H1 (cell line): ENCODE measurements at regions of chrX and their contacts with region 1.

Region 1: GRCh38 chrX:146189371-146189770 is 371.7 kb downstream of the SLITRK2 start:
- DNase-seq: no peak
- H3K4me3 ChIP-seq: no peak overlapping the region
- H3K27ac ChIP-seq: no peak overlapping the region
- H3K4me1 ChIP-seq: no peaks in the 10 kb centered on the region
- H3K27me3 ChIP-seq: no peaks in the 10 kb centered on the region
- CTCF ChIP-seq: no peak
- EP300 ChIP-seq: no peak
- POLR2A ChIP-seq: no peak
- RAD21 ChIP-seq: no peak

Region 2: DNA sequence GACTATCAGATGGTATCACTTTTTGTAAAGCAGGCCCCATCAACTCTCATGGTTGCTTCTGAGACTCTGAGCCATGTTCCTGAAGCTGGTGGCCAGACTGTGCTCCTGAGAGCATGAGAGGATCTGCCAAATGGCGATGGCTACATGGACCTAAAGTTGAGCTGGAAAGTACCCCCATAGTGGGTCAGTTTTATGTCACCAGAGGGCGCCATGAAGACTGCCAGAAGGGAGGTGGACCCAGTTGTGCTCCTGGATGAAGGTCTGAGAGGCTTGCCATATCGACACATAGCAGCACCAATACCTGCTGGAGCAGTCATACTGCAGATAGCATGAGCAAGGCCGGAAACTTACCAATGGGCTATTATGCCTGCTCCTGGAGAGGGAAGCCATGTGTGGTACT is 266.0 kb before region 1 on chrX:
- CTCF ChIA-PET with region 1: interaction called, 10 read pairs
- POLR2A ChIA-PET with region 1: no interaction called
- DNase-seq: peak; percentile 0 to 55
- H3K4me3 ChIP-seq: no peak overlapping the region
- H3K27ac ChIP-seq: no peak overlapping the region
- H3K4me1 ChIP-seq: no peaks in the 10 kb centered on the region
- H3K27me3 ChIP-seq: no peaks in the 10 kb centered on the region
- CTCF ChIP-seq: peak; percentile 3 to 48 (median 45)
- EP300 ChIP-seq: no peak
- POLR2A ChIP-seq: no peak
- RAD21 ChIP-seq: peak; percentile 52 to 65

Region 3: DNA sequence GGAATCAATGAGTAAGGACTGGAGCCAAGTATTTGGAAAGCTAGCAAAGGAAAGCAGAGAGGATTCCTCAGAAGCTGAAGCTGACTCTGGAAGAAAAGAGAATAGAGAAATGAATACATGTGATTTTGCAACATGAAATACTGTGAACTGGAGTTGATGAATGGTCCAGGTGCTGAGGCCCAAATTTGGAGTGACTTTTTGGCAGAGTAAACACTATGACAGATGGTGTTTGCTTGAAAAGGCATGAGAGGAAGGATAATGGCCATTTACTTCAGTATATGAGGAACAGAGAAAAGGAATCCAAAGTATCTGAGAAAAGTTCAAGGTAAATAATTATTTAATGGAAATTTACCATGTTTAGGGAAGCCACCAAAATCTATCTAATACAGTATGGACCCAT is 135.1 kb before region 1 on chrX:
- CTCF ChIA-PET with region 1: no interaction called
- POLR2A ChIA-PET with region 1: no interaction called
- DNase-seq: no peak
- H3K4me3 ChIP-seq: no peak overlapping the region
- H3K27ac ChIP-seq: no peak overlapping the region
- H3K4me1 ChIP-seq: no peaks in the 10 kb centered on the region
- H3K27me3 ChIP-seq: no peaks in the 10 kb centered on the region
- CTCF ChIP-seq: no peak
- EP300 ChIP-seq: no peak
- POLR2A ChIP-seq: no peak
- RAD21 ChIP-seq: no peak

Region 4: DNA sequence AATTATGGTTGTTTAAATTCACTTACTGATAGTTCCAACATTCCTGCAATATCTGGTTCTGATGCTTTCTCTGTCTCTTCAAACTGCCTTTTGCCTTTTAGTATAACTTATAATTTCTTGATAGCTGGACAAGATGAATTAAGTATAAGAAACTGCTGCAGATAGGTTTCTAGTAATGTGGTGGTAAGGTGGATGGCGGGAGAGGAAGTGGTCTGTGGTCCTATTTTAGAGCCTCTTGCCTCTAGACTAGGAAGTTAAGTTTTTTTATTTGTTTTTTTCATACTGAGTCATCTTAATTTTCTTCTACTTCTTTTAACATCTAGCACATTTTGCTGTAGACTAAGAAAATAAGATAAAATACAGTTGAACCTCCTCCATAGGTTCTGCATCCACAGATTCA is 61.8 kb before region 1 on chrX:
- CTCF ChIA-PET with region 1: no interaction called
- POLR2A ChIA-PET with region 1: no interaction called
- DNase-seq: no peak
- H3K4me3 ChIP-seq: no peak overlapping the region
- H3K27ac ChIP-seq: no peak overlapping the region
- H3K4me1 ChIP-seq: no peaks in the 10 kb centered on the region
- H3K27me3 ChIP-seq: no peaks in the 10 kb centered on the region
- CTCF ChIP-seq: no peak
- EP300 ChIP-seq: no peak
- POLR2A ChIP-seq: no peak
- RAD21 ChIP-seq: no peak